Sciatic nerve (tissue), 2 donors: ENCODE measurements at regions of chr1 and their contacts with region 1.

Region 1: GRCh38 chr1:43414634-43415223 is 25.0 kb downstream of the SZT2 start:
- DNase-seq: no peak
- ATAC-seq: peak; percentile 87

Region 2: DNA sequence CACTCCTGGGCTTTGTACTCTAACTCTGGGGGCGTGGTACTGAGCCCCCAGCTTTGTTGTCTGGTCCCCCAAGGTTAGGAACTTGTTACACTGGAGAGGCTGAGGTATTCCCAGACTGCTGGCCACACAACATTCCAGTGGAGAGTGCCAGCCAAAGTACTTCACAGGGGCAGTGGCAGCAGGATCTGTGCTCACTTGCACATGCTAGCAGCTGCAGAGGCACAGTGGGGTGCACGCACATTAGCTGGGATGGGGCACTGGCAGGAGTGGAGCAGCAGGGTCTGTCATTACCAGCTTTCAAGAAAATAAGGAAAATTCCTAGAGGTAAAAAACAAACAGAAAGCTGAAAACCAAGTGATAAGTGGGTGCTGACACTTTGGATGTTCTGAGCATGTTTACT is 537.3 kb before region 1 on chr1:
- intact Hi-C with region 1: no loop called
- DNase-seq: no peak
- ATAC-seq: no peak

Region 3: GRCh38 chr1:43227143-43227764 is 187.5 kb before region 1 on chr1:
- intact Hi-C with region 1: loop called (anchors 5 kb)
- DNase-seq: peak; percentile 95
- ATAC-seq: peak; percentile 84

Region 4: DNA sequence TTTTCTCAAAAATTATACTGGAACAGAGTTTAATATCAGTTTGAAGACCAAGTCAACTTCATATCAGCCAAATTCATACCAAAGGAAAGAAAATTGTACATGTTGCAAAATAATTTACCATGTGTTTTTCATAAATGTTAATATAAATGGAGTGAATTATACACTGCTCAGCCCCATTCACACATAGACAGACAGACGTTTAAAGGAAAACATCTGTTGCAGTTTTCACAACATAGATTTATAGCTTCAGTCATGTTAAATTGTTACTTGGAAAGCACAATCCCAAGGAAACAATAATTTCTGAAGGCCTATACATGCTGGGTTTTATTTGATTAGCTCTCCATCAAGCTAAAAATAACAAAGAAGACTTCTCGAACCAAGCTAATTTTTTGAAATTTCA is 66.8 kb after region 1 on chr1:
- intact Hi-C with region 1: no loop called
- DNase-seq: no peak
- ATAC-seq: no peak